ENCODE measurements at regions of chr3 and their contacts with region 1.

Region 1: DNA sequence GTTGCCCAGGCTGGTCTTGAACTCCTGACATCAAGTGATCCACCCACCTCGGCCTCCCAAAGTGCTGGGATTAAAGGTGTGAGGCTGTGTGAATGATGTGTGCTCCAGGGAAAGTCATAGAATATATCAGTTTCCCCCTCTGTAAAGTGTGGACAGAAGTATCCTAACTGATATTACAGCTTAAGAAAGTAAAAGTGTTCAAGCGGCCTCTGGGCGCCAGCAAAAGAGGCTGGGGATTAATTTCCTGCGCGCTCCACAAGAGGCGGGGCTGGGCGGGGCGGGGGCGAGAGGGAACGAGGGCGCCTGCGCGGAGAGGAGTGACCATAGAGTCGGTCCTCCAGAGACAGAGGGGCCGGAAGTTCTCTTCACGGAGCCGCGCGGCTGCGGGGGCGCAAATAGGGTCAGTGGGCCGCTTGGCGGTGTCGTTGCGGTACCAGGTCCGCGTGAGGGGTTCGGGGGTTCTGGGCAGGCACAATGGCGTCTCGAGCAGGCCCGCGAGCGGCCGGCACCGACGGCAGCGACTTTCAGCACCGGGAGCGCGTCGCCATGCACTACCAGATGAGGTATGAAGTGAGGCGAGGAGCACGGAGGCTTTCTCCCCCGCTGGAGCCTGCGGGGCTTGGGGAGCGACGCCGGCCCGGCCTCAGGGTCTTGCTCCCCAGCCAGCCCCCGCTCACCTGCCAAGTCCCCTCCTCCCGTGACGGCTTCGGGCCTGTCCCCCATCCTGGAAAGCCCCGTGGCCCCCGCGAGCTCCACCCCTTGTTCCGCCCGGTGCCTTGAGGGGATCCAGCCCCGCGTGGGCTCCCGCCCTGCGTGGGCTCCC is at the start of gene JAGN1:
- DNase-seq: peak; percentile 95
- H3K4me3 Mint-ChIP-seq: peak within 1 kb of the TSS; percentile 98
- H3K27ac Mint-ChIP-seq: peak within 1 kb of the TSS; percentile 97
- H3K4me1 Mint-ChIP-seq: peaks cover 43% of the 10 kb centered on the region
- H3K27me3 Mint-ChIP-seq: no peaks in the 10 kb centered on the region
- total RNA-seq, gene JAGN1: 11.7 to 13.6 TPM

Region 2: GRCh38 chr3:9792405-9793160 is 97.9 kb before region 1 on chr3 and contains the starts of genes ARPC4 and TADA3:
- CTCF ChIA-PET with region 1: no interaction called
- intact Hi-C with region 1: loop called (anchors 1 kb)
- DNase-seq: peak; percentile 94
- H3K4me3 Mint-ChIP-seq: peak within 1 kb of the TSS; percentile 94
- H3K27ac Mint-ChIP-seq: peak within 1 kb of the TSS; percentile 100
- H3K4me1 Mint-ChIP-seq: peaks cover 67% of the 10 kb centered on the region
- H3K27me3 Mint-ChIP-seq: no peaks in the 10 kb centered on the region
- total RNA-seq, gene ARPC4: 141 to 144 TPM
- total RNA-seq, gene TADA3: 62.4 to 67.6 TPM

Region 3: GRCh38 chr3:9809615-9810432 is 80.6 kb before region 1 on chr3 and contains the start of gene TTLL3:
- CTCF ChIA-PET with region 1: no interaction called
- intact Hi-C with region 1: no loop called
- DNase-seq: peak; percentile 38
- H3K4me3 Mint-ChIP-seq: peak within 1 kb of the TSS; percentile 81
- H3K27ac Mint-ChIP-seq: peak within 1 kb of the TSS; percentile 92
- H3K4me1 Mint-ChIP-seq: peaks cover 32% of the 10 kb centered on the region
- H3K27me3 Mint-ChIP-seq: no peaks in the 10 kb centered on the region
- total RNA-seq, gene TTLL3: 46.3 to 47.1 TPM

Region 4: DNA sequence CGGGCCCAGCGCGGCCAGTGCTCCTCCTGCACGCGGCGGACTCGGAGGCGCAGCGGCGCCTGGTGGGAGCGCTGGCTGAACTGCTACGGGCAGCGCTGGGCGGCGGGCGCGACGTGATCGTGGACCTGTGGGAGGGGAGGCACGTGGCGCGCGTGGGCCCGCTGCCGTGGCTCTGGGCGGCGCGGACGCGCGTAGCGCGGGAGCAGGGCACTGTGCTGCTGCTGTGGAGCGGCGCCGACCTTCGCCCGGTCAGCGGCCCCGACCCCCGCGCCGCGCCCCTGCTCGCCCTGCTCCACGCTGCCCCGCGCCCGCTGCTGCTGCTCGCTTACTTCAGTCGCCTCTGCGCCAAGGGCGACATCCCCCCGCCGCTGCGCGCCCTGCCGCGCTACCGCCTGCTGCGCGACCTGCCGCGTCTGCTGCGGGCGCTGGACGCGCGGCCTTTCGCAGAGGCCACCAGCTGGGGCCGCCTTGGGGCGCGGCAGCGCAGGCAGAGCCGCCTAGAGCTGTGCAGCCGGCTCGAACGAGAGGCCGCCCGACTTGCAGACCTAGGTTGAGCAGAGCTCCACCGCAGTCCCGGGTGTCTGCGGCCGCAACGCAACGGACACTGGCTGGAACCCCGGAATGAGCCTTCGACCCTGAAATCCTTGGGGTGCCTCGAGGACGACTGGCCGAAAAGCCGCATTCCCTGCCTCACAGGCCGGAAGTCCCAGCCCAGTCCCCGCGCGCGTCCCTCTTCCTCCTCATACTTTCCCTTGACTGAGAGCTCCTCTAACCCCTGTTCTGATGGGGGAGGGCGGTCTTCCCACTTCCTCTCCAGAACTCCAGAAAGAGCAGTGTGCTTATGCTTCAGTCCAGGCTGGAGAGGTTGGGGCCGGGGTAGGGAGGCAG is 25.0 kb after region 1 on chr3:
- CTCF ChIA-PET with region 1: interaction called, 4 read pairs
- intact Hi-C with region 1: loop called (anchors 1 kb)
- DNase-seq: peak; percentile 47
- H3K4me3 Mint-ChIP-seq: peak overlapping the region; percentile 71
- H3K27ac Mint-ChIP-seq: no peak overlapping the region
- H3K4me1 Mint-ChIP-seq: peaks cover 13% of the 10 kb centered on the region
- H3K27me3 Mint-ChIP-seq: peaks cover 5% of the 10 kb centered on the region

Region 5: DNA sequence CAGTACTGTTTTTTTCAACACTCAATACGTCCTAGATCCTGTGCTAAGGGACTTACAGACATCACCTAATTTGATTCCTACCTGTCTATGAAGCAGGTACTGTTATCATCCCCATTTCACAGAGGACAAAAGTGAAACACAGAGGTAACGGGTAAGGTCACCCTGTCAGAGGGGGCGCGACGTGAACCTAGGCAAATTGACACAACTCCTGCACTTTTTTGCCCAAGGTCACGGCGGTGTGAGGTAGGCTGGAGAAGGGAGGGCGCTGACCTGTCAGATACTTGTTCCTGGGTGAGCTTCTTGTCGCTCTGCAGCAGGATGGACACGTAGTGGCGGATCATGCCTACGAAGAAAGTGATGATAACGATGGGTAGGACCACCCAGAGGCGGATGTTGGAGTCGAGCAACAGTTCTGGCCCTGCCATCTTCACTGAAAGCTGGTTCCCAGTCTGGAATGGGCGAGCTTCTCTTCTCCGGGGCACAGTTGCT is 95.8 kb after region 1 on chr3:
- CTCF ChIA-PET with region 1: no interaction called
- intact Hi-C with region 1: loop called (anchors 1 kb)
- DNase-seq: no peak
- H3K4me3 Mint-ChIP-seq: peak overlapping the region; percentile 97
- H3K27ac Mint-ChIP-seq: peak overlapping the region; percentile 99
- H3K4me1 Mint-ChIP-seq: peaks cover 39% of the 10 kb centered on the region
- H3K27me3 Mint-ChIP-seq: no peaks in the 10 kb centered on the region

Region 6: DNA sequence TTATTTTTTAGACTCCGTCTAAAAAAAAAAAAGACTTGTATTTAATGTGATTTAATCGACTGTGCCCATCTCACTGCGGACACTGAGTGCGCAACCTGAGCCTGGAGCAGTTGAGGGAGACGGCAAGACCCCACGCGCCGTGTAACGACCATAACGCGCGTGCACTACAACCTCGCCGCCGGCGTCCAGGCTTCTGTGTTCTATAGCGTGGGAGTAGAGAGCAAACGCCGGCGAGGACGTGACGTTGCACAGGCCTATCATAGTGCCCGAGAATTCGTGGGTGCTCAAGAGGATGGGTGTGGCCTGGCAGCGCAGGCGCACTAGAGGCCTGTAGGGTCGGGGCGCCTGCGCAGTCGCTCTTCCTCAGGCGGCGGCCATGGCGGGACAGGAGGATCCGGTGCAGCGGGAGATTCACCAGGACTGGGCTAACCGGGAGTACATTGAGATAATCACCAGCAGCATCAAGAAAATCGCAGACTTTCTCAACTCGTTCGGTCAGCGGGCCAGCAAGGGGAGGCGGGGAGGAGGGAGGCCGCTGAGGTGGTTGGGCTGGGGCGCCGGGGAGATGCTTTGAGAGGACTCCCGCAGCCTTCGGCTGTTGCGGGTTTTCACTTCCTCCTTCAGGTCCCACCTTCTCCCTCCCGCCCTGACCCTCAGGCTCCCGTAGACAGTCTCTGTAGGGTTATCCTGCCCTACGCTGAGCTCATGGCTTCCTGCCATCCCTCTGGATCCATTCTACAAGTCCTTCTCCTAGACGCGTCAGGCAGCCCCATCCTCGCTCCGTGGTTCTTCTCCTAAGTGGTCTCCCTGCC is 225.1 kb after region 1 on chr3 and contains the start of gene BRK1:
- CTCF ChIA-PET with region 1: no interaction called
- intact Hi-C with region 1: loop called (anchors 1 kb)
- DNase-seq: peak; percentile 97
- H3K4me3 Mint-ChIP-seq: peak within 1 kb of the TSS; percentile 92
- H3K27ac Mint-ChIP-seq: peak within 1 kb of the TSS; percentile 94
- H3K4me1 Mint-ChIP-seq: peaks cover 31% of the 10 kb centered on the region
- H3K27me3 Mint-ChIP-seq: no peaks in the 10 kb centered on the region
- total RNA-seq, gene BRK1: 73.6 to 73.7 TPM

Region 7: DNA sequence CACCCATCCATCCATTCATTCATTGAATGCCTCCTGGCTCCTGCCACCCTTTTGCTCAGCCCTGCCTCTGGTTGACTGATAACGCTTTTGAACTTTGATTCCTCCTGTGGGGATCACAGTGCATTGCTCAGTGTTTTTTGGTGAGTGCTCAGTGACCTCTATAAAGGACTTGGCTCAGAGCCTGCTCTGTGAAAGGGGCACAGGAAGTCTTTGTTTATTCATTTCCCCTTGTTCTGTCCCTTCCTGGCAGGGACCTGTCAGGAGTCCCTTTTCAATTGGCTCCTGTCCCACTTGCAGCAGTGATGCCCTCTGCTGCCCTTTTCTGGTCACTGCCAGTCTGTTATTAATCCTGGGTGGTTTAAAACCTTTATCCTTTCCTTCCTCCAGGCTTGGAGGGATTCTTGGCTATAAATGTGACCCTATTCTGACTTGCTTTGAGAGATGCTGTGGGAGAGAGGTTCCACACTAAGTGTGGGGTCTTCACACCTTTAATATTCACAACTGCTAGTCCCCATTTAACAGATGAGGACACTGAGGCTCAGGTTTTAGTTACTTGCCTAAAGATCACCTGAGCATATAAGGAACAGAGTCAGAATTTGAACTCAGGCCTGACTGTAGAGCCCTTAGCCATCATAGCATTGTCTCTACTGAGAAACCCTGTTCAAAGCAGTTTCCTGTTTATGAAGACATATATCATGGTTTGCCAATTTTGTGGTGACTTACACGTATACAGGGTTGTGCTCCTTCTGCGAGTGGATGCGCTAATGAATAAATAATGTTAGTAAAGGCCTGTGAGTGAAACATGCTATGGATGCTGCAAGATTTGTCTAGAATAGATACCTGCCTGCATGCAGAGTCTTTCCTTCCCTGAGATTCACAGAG is 334.6 kb after region 1 on chr3:
- CTCF ChIA-PET with region 1: no interaction called
- intact Hi-C with region 1: loop called (anchors 1 kb)
- DNase-seq: peak; percentile 88
- H3K4me3 Mint-ChIP-seq: no peak overlapping the region
- H3K27ac Mint-ChIP-seq: peak overlapping the region; percentile 79
- H3K4me1 Mint-ChIP-seq: peaks cover 58% of the 10 kb centered on the region
- H3K27me3 Mint-ChIP-seq: no peaks in the 10 kb centered on the region

Region 8: GRCh38 chr3:11846281-11847034 is 1956.0 kb after region 1 on chr3 and contains the start of gene TAMM41:
- CTCF ChIA-PET with region 1: no interaction called
- intact Hi-C with region 1: loop called (anchors 5 kb)
- DNase-seq: peak; percentile 95
- H3K4me3 Mint-ChIP-seq: peak within 1 kb of the TSS; percentile 97
- H3K27ac Mint-ChIP-seq: peak within 1 kb of the TSS; percentile 80
- H3K4me1 Mint-ChIP-seq: peaks cover 26% of the 10 kb centered on the region
- H3K27me3 Mint-ChIP-seq: no peaks in the 10 kb centered on the region
- total RNA-seq, gene TAMM41: 19.3 to 21.4 TPM